ENCODE measurements at regions of chr3 and their contacts with region 1.

Region 1: GRCh38 chr3:69665026-69665737 is 74.1 kb upstream of the MITF start:
- DNase-seq: no peak
- H3K4me3 ChIP-seq: no peak overlapping the region
- H3K27ac ChIP-seq: peak overlapping the region in 7 of 8 donors; percentile 15 to 69 (median 56)
- H3K4me1 ChIP-seq: peaks cover 0 to 30% (median 7%) of the 10 kb centered on the region in 6 donors
- H3K27me3 ChIP-seq: no peaks in the 10 kb centered on the region
- CTCF ChIP-seq: no peak
- POLR2A ChIP-seq: peak in 1 of 3 donors; percentile 2

Region 2: GRCh38 chr3:68817243-68817642 is 847.9 kb before region 1 on chr3:
- intact Hi-C with region 1: no loop called
- DNase-seq: no peak
- H3K4me3 ChIP-seq: no peak overlapping the region
- H3K27ac ChIP-seq: no peak overlapping the region
- H3K4me1 ChIP-seq: no peaks in the 10 kb centered on the region
- H3K27me3 ChIP-seq: no peaks in the 10 kb centered on the region
- CTCF ChIP-seq: no peak
- POLR2A ChIP-seq: no peak

Region 3: GRCh38 chr3:69273896-69274295 is 391.3 kb before region 1 on chr3:
- intact Hi-C with region 1: no loop called
- DNase-seq: no peak
- H3K4me3 ChIP-seq: no peak overlapping the region
- H3K27ac ChIP-seq: no peak overlapping the region
- H3K4me1 ChIP-seq: no peaks in the 10 kb centered on the region
- H3K27me3 ChIP-seq: no peaks in the 10 kb centered on the region
- CTCF ChIP-seq: no peak
- POLR2A ChIP-seq: no peak

Region 4: GRCh38 chr3:69439643-69440270 is 225.4 kb before region 1 on chr3:
- intact Hi-C with region 1: loop called (anchors 10 kb)
- DNase-seq: no peak
- H3K4me3 ChIP-seq: peak overlapping the region in 2 of 8 donors; percentile 6 to 8
- H3K27ac ChIP-seq: peak overlapping the region in 6 of 8 donors; percentile 17 to 65 (median 40)
- H3K4me1 ChIP-seq: peaks cover 0 to 19% (median 11%) of the 10 kb centered on the region in 6 donors
- H3K27me3 ChIP-seq: no peaks in the 10 kb centered on the region
- CTCF ChIP-seq: peak in 10 of 11 experiments; percentile 25 to 63 (median 50)
- POLR2A ChIP-seq: no peak

Region 5: DNA sequence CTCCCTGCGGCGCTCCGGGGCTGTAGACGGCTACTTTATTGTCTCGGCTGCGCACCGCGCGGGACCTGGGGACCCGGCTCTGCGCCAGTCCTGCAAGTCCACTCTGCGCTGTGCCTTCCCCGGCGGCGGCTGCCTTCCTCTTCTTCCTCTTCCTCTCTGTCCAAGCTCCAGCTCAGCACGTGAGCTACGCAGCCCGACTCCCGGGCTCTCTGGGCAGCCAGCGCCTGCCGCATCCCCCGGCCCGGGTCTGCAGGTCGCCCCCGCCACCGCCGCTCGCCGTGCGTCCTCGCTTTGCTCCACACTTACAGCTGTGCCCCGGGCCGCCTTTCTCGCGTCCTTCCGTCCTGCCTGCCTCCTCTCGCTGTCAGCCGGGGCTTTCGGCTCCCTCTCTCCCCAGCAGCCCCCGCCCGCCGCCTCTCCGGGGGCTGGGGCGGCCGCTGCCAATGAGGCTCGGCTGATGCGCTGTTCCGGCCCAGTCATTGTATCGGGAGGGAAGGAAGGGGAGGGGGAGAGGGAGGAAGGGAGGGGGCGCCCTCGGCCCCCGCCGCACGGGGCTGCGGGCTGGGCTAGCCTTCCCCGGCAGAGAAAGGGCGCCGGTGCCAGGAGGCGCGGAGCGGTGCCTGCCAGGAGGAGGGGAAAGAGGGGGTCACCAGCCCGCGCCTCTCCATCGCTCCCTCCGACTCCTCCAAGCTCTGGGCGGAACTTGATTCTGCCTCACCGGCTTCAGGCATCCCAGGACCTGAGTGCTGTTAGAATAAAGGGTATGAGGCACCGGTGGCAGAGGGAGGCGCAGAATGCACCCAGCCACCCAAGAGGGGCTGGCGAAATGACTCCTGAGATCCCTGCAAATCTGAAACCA is 122.7 kb before region 1 on chr3:
- intact Hi-C with region 1: loop called (anchors 10 kb)
- DNase-seq: peak; percentile 76
- H3K4me3 ChIP-seq: peak overlapping the region; percentile 58 to 78 (median 70)
- H3K27ac ChIP-seq: peak overlapping the region; percentile 49 to 84 (median 79)
- H3K4me1 ChIP-seq: peaks cover 0 to 53% (median 23%) of the 10 kb centered on the region in 6 donors
- H3K27me3 ChIP-seq: peaks cover 0 to 34% (median 13%) of the 10 kb centered on the region in 7 donors
- CTCF ChIP-seq: no peak
- POLR2A ChIP-seq: no peak

Region 6: GRCh38 chr3:69806735-69807438 is 141.7 kb after region 1 on chr3:
- intact Hi-C with region 1: no loop called
- DNase-seq: no peak
- H3K4me3 ChIP-seq: no peak overlapping the region
- H3K27ac ChIP-seq: no peak overlapping the region
- H3K4me1 ChIP-seq: no peaks in the 10 kb centered on the region
- H3K27me3 ChIP-seq: no peaks in the 10 kb centered on the region
- CTCF ChIP-seq: no peak
- POLR2A ChIP-seq: no peak

Region 7: DNA sequence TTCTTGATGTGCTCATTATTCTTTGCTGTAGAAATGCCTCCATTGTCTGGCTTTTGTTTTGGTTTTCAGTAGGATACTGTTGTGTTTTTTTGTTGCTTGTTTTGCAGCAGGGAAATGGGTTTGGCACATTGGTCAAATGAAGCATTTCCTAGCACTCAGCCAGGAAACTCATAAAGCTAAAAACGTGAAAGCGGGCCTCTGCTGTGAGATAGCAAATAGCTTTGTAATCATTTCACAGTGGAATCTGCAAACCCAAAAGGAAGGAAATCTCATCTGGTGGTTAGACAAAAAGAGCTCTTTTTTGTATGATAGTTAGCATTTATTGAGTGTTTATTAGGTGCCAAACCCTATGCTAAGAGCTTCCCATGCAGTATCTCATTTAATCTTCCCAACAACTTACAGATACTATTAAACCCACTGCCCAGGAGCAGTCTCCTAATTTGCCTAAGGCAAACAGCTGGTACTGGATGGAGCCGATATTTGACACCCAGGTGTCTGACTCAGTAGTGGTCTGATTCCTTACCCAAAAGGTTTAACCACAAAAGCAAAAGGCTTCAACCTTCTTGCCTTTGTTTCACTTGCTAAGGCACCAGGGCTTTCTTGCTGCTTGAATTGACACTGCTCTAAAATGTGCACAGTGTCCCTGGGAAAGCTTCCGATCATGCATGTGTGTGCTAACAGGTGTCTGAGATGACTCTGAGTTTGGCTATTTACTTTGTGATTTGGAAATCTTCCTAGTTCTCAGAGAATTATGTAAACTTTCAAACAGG is 1175.1 kb after region 1 on chr3:
- intact Hi-C with region 1: no loop called
- DNase-seq: no peak
- H3K4me3 ChIP-seq: no peak overlapping the region
- H3K27ac ChIP-seq: no peak overlapping the region
- H3K4me1 ChIP-seq: peaks cover 0 to 9% (median 4%) of the 10 kb centered on the region in 6 donors
- H3K27me3 ChIP-seq: no peaks in the 10 kb centered on the region
- CTCF ChIP-seq: no peak
- POLR2A ChIP-seq: no peak